ENCODE measurements at regions of chrX and their contacts with region 1.

Region 1: GRCh38 chrX:15674841-15675489 is 10.4 kb upstream of the CLTRN start:
- DNase-seq: peak; percentile 92
- ATAC-seq: peak; percentile 79
- H3K4me3 Mint-ChIP-seq: no peak overlapping the region
- H3K27ac Mint-ChIP-seq: no peak overlapping the region
- H3K4me1 Mint-ChIP-seq: peaks cover 25% of the 10 kb centered on the region
- H3K27me3 Mint-ChIP-seq: no peaks in the 10 kb centered on the region

Region 2: DNA sequence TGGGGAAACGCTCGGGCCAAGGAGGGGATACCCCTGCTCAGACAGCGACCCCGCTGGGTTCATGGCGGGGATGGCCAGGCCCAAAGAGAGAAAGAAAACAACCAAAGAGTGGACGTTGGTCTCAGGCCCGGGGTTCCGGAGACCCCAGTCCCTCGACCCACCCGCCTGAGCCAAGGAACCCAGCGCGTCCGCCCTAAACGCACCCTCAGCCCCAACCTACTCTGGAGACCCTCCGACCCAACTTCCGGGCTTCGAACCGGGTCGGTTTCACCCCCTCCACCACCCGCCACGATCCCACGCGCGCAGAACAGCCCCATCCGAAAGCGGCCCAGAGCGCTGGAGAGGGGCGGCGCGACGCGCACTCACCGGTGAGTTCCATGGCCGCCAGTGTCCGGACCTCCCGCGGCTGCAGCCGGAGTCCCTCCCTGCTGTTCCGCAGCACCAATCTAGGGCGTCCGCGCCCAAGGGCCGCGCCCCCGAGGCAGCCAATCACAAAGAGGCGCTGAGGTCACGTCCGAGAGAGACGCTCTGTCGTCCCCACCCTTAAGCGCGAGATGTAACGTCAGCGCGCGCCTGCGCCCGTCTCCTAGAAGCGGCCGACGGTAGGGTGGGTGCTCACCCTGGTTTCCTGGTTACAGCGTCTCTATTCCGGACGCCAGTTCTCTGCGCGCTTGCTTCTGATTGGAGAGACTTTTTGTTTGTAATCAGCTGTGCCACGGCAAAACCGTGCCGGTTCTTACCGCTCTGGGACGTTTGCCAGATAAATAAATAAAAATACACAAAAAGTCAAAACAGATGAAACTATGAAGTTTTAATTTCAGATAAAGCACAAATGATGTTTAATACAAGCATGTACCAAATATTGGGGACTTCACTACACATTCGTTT is 339.6 kb before region 1 on chrX and contains the start of gene PIGA:
- CTCF ChIA-PET with region 1: no interaction called
- POLR2A ChIA-PET with region 1: no interaction called
- intact Hi-C with region 1: loop called (anchors 1 to 2 kb)
- DNase-seq: peak; percentile 94
- ATAC-seq: peak; percentile 97
- H3K4me3 Mint-ChIP-seq: peak within 1 kb of the TSS; percentile 84
- H3K27ac Mint-ChIP-seq: peak within 1 kb of the TSS; percentile 91
- H3K4me1 Mint-ChIP-seq: peaks cover 14% of the 10 kb centered on the region
- H3K27me3 Mint-ChIP-seq: peaks cover 4% of the 10 kb centered on the region
- total RNA-seq, gene PIGA: 37.2 to 37.9 TPM

Region 3: GRCh38 chrX:15737960-15738902 is 63.3 kb after region 1 on chrX and contains the start of gene CA5B:
- CTCF ChIA-PET with region 1: interaction called, 3 read pairs
- POLR2A ChIA-PET with region 1: no interaction called
- intact Hi-C with region 1: loop called (anchors 1 kb)
- DNase-seq: peak; percentile 97
- ATAC-seq: peak; percentile 94
- H3K4me3 Mint-ChIP-seq: peak within 1 kb of the TSS; percentile 82
- H3K27ac Mint-ChIP-seq: peak within 1 kb of the TSS; percentile 78
- H3K4me1 Mint-ChIP-seq: peaks cover 40% of the 10 kb centered on the region
- H3K27me3 Mint-ChIP-seq: no peaks in the 10 kb centered on the region
- total RNA-seq, gene CA5B: 13.3 to 17.7 TPM

Region 4: GRCh38 chrX:15789979-15790768 is 115.2 kb after region 1 on chrX and contains the start of gene ZRSR2:
- CTCF ChIA-PET with region 1: no interaction called
- POLR2A ChIA-PET with region 1: interaction called, 3 read pairs
- intact Hi-C with region 1: loop called (anchors 1 kb)
- DNase-seq: peak; percentile 92
- ATAC-seq: peak; percentile 91
- H3K4me3 Mint-ChIP-seq: no peak within 1 kb of the TSS
- H3K27ac Mint-ChIP-seq: no peak within 1 kb of the TSS
- H3K4me1 Mint-ChIP-seq: peaks cover 18% of the 10 kb centered on the region
- H3K27me3 Mint-ChIP-seq: no peaks in the 10 kb centered on the region
- total RNA-seq, gene ZRSR2: 12.4 TPM